ENCODE measurements at regions of chr1 and their contacts with region 1.

Region 1: GRCh38 chr1:203267347-203267846 is 37.9 kb upstream of the BTG2 start:
- DNase-seq: peak; percentile 78
- ATAC-seq: peak; percentile 85
- H3K4me3 ChIP-seq: peak overlapping the region; percentile 59
- H3K27ac ChIP-seq: peak overlapping the region; percentile 71
- H3K4me1 ChIP-seq: no peaks in the 10 kb centered on the region
- H3K27me3 ChIP-seq: peaks cover 13% of the 10 kb centered on the region
- CTCF ChIP-seq: peak; percentile 88
- POLR2A ChIP-seq: no peak
- RAD21 ChIP-seq: peak; percentile 73

Region 2: GRCh38 chr1:203326830-203327683 is 59.7 kb after region 1 on chr1:
- CTCF ChIA-PET with region 1: interaction called, 18 read pairs
- POLR2A ChIA-PET with region 1: no interaction called
- dilution Hi-C with region 1: no loop called
- in situ Hi-C with region 1: no loop called
- intact Hi-C with region 1: no loop called
- DNase-seq: peak; percentile 79
- ATAC-seq: peak; percentile 97
- H3K4me3 ChIP-seq: peak overlapping the region; percentile 56
- H3K27ac ChIP-seq: no peak overlapping the region
- H3K4me1 ChIP-seq: peaks cover 4% of the 10 kb centered on the region; the same call in 1 of the 2 replicates
- H3K27me3 ChIP-seq: peaks cover 56% of the 10 kb centered on the region
- CTCF ChIP-seq: no peak
- POLR2A ChIP-seq: no peak
- RAD21 ChIP-seq: no peak

Measured in IMR-90 (cell line).